Gastrocnemius medialis (tissue), 4 donors: ENCODE measurements at regions of chr1 and their contacts with region 1.

Region 1: GRCh38 chr1:51616901-51617708 is at the start of gene OSBPL9:
- DNase-seq: peak; percentile 86 to 89
- ATAC-seq: peak; percentile 60 to 75
- H3K4me3 ChIP-seq: peak within 1 kb of the TSS; percentile 79 to 99 (median 94)
- H3K27ac ChIP-seq: peak within 1 kb of the TSS; percentile 94 to 99 (median 99)
- H3K4me1 ChIP-seq: peaks cover 47 to 58% of the 10 kb centered on the region in 2 donors
- H3K27me3 ChIP-seq: no peaks in the 10 kb centered on the region
- CTCF ChIP-seq: no peak
- POLR2A ChIP-seq: peak; percentile 88 to 95
- total RNA-seq, gene OSBPL9: 65.8 to 206 (median 136) TPM

Region 2: DNA sequence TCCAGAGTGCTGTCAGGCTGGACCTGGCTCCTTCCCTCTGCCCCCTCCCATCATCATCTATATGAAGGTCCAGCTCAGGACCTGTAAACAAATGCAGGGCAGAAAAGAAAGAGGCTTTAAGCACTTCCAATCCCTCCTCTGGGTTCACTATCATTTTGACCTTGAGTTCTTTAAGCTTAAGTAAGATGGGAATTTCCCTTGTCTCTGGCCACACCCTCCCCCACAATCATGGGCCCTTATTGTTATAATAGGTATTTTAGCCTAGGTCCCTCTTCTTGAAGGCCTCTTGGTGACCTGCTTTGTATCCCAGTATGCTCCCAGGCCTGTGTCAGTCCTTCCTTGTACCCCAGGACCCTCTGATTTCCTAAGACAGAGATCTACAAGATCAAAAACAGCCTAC is 53.0 kb before region 1 on chr1:
- in situ Hi-C with region 1: no loop called
- intact Hi-C with region 1: loop called (anchors 5 kb)
- DNase-seq: no peak
- ATAC-seq: no peak
- H3K4me3 ChIP-seq: no peak overlapping the region
- H3K27ac ChIP-seq: peak overlapping the region; percentile 91 to 94 (median 93)
- H3K4me1 ChIP-seq: peaks cover 62 to 65% of the 10 kb centered on the region in 2 donors
- H3K27me3 ChIP-seq: no peaks in the 10 kb centered on the region
- CTCF ChIP-seq: no peak
- POLR2A ChIP-seq: no peak